ENCODE measurements at regions of chr2 and their contacts with region 1.

Region 1: DNA sequence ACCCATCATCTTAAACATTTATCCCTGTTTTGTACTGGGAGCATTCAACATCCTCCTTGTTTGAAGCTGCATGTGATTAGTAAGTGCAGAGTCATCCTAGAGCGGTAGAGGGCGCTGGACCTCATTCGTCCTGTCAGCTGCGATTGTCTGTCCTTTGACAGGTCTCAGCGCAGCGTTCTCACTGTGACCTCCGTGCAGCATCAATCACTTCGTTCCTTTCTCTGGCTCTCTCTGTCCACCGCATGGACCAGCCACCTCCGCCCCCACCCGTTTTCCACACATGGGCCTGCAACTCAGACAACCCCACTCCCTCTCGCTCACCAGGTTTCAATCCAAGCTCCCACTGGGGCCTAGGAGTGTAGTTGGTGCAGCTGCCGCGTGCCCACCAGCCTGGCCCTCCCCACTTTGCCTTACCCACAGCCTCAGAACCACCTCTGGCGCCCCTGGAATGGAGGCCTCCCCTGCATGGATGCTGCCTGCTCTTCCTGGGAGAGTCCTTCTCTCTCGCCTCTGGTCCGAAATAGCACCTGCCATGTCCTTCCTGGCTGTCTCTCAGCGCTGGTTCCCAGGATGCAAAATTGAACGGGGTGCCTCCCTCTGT is 90.5 kb downstream of the NDUFA10 start:
- DNase-seq: peak; percentile 76
- ATAC-seq: peak; percentile 77
- H3K4me3 Mint-ChIP-seq: no peak overlapping the region
- H3K27ac Mint-ChIP-seq: no peak overlapping the region
- H3K4me1 Mint-ChIP-seq: peaks cover 6% of the 10 kb centered on the region
- H3K27me3 Mint-ChIP-seq: no peaks in the 10 kb centered on the region

Region 2: DNA sequence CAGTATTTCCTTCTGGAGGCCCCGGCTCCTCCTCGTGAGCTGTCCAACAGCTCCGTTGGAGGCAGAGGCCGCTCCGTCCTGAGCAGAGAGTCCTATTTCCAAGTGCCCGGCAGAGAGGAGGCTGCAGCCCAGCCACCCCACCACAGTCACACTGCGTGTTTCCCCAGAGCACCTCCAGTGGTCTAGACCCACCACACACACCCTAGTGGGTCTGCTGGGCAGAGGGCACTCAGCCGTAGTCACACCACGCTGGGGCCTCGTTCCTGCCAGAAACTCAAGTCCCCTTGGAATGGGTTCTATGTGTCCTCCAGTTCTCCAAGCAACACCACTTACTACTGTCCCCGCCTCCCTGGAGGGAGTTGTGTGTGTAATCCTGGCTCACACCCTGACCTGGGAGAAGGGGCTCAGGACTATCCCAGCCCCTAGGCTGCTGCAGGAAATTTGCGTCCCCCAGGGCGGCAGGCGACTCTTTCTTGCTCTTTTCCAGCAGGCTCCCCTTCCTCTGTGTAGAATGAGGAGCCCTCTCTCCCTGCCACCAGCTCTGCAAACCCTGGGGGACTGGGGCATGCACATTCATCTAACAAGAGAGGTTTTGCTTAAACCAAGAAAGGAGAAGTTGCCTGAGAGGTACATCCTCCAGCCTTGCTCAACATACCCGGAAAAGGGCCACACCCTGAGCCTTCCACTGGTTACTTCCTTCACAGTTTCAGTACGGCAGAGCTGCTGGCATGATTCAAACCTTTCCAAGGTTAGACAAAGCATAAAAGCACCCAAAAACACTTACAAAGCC is 23.6 kb before region 1 on chr2:
- CTCF ChIA-PET with region 1: no interaction called
- POLR2A ChIA-PET with region 1: no interaction called
- DNase-seq: peak; percentile 47
- ATAC-seq: peak; percentile 66
- H3K4me3 Mint-ChIP-seq: no peak overlapping the region
- H3K27ac Mint-ChIP-seq: peak overlapping the region; percentile 88
- H3K4me1 Mint-ChIP-seq: peaks cover 14% of the 10 kb centered on the region
- H3K27me3 Mint-ChIP-seq: no peaks in the 10 kb centered on the region

Region 3: GRCh38 chr2:239944694-239945551 is 10.3 kb after region 1 on chr2:
- CTCF ChIA-PET with region 1: interaction called, 15 read pairs
- POLR2A ChIA-PET with region 1: interaction called, 6 read pairs
- DNase-seq: peak; percentile 66
- ATAC-seq: peak; percentile 74
- H3K4me3 Mint-ChIP-seq: peak overlapping the region; percentile 39
- H3K27ac Mint-ChIP-seq: peak overlapping the region; percentile 80
- H3K4me1 Mint-ChIP-seq: peaks cover 13% of the 10 kb centered on the region
- H3K27me3 Mint-ChIP-seq: no peaks in the 10 kb centered on the region

Region 4: GRCh38 chr2:239991689-239992314 is 57.1 kb after region 1 on chr2:
- CTCF ChIA-PET with region 1: interaction called, 44 read pairs
- POLR2A ChIA-PET with region 1: no interaction called
- DNase-seq: peak; percentile 40
- ATAC-seq: peak; percentile 64
- H3K4me3 Mint-ChIP-seq: no peak overlapping the region
- H3K27ac Mint-ChIP-seq: no peak overlapping the region
- H3K4me1 Mint-ChIP-seq: no peaks in the 10 kb centered on the region
- H3K27me3 Mint-ChIP-seq: no peaks in the 10 kb centered on the region

Region 5: DNA sequence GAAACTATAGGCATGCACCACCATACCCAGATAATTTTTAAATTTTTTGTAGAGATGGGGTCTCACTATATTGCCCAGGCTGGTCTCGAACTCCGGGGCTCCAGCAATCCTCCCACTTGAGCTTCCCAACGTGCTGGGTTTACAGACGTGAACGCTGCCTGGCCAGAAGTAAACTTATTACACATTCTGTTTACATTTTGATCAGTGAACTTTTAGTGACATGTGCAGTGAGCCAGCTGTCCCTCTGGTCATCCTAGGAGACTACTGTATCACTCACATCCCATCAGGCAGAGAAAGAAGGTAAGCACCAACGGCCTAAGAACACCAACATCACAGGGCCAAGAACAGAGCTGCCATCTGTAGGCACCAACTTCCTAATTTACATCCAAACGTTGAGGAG is 68.3 kb after region 1 on chr2:
- CTCF ChIA-PET with region 1: no interaction called
- POLR2A ChIA-PET with region 1: no interaction called
- DNase-seq: no peak
- ATAC-seq: no peak
- H3K4me3 Mint-ChIP-seq: no peak overlapping the region
- H3K27ac Mint-ChIP-seq: no peak overlapping the region
- H3K4me1 Mint-ChIP-seq: no peaks in the 10 kb centered on the region
- H3K27me3 Mint-ChIP-seq: no peaks in the 10 kb centered on the region

Region 6: DNA sequence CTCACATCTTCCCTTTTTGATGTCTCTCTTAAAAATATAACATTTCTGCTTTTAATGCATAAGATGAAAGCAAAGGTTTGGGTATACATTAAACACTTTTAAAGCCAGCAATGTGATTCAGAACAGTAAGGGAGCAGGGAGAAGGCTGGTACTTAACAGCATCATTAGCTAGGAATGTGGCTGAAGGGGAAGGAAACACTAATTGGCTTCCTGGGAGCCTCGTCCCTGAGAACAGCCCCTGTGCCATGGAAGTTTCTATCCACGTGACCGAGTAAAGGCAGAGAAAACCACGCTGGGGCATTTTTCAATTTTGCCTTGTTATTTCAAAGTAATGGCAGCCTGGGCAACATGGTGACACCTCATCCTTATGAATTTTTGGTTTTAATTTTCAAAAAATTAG is 391.6 kb after region 1 on chr2:
- CTCF ChIA-PET with region 1: no interaction called
- POLR2A ChIA-PET with region 1: no interaction called
- DNase-seq: no peak
- ATAC-seq: no peak
- H3K4me3 Mint-ChIP-seq: no peak overlapping the region
- H3K27ac Mint-ChIP-seq: no peak overlapping the region
- H3K4me1 Mint-ChIP-seq: no peaks in the 10 kb centered on the region
- H3K27me3 Mint-ChIP-seq: no peaks in the 10 kb centered on the region